Panc1 (cell line): ENCODE measurements at regions of chr18 and their contacts with region 1.

Region 1: DNA sequence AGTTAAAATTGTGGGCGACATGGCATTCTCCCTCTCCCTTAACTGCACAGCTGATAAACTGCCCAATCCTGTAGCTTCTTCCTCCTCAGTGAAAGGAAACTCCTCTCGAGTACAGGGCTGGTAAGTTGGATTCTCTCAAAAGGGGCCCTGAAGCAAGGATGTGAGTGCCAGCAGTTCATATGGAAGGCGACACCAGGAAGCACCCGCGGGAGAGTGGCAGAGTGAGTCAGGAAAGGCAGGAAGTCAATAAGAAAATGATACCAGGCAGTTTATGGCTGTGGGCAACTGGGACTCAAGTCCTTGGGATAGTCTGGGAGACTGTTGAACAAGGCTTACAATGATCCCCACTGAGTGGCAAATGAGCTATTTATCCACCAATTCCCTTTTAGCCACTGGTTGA is 34.8 kb downstream of the ABHD3 start:
- DNase-seq: no peak
- ATAC-seq: no peak
- H3K4me3 ChIP-seq: no peak overlapping the region
- H3K27ac ChIP-seq: no peak overlapping the region
- H3K4me1 ChIP-seq: peaks cover 3% of the 10 kb centered on the region; the same call in 1 of the 2 replicates
- H3K27me3 ChIP-seq: no peaks in the 10 kb centered on the region
- CTCF ChIP-seq: no peak

Region 2: GRCh38 chr18:21682371-21683051 is 12.8 kb after region 1 on chr18:
- CTCF ChIA-PET with region 1: no interaction called
- POLR2A ChIA-PET with region 1: interaction called, 14 read pairs
- in situ Hi-C with region 1: no loop called
- intact Hi-C with region 1: no loop called
- DNase-seq: no peak
- ATAC-seq: no peak
- H3K4me3 ChIP-seq: no peak overlapping the region
- H3K27ac ChIP-seq: no peak overlapping the region
- H3K4me1 ChIP-seq: 0 out of 2 replicates have a peak, but pooled peaks cover 2% of the 10 kb centered on the region
- H3K27me3 ChIP-seq: no peaks in the 10 kb centered on the region
- CTCF ChIP-seq: no peak